Vagina (tissue), 2 donors: ENCODE measurements at regions of chr5 and their contacts with region 1.

Region 1: GRCh38 chr5:111703662-111704061 is 53.3 kb downstream of the NREP start:
- DNase-seq: no peak
- H3K4me3 ChIP-seq: no peak overlapping the region
- H3K27ac ChIP-seq: no peak overlapping the region
- H3K4me1 ChIP-seq: no peaks in the 10 kb centered on the region
- H3K27me3 ChIP-seq: no peaks in the 10 kb centered on the region
- CTCF ChIP-seq: no peak
- POLR2A ChIP-seq: no peak

Region 2: DNA sequence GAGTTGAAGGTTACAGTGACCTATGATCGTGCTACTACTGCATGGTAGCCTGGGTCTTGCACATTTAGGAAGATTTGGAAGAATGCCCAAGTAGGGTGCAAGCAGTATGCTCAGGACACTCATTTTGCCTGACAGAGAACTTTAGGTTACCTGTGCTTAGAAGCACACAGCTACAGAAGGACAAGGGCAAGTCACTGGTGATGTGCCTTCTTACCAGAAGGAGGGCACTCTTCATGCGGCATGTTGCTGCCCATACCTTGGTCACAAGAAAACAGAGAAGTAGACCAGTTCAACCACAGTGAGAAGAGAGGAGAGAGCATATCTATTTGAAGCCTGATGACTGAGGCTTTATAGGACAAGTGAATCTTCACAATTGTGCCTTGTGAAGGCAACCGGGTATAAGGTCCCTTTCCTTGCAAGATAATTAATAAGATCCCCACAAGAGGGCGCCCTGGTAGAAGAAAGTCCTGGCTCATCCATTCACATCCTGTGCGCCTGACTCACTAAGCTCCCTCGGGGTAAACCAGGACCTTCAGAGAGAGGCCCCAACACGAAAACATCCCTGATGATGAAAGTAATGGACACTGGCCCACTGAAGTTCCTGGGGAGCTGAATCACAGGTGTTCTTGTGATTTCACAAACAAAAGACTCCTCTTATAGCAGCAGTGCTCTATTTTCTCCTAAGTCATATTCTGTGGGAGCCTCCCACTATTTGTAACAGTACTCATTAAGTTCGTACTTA is 153.2 kb before region 1 on chr5:
- intact Hi-C with region 1: no loop called
- DNase-seq: peak in 1 of 2 donors; percentile 96
- H3K4me3 ChIP-seq: no peak overlapping the region
- H3K27ac ChIP-seq: peak overlapping the region; percentile 51
- H3K4me1 ChIP-seq: no peaks in the 10 kb centered on the region
- H3K27me3 ChIP-seq: no peaks in the 10 kb centered on the region
- CTCF ChIP-seq: peak; percentile 33 to 74 (median 67)
- POLR2A ChIP-seq: no peak

Region 3: DNA sequence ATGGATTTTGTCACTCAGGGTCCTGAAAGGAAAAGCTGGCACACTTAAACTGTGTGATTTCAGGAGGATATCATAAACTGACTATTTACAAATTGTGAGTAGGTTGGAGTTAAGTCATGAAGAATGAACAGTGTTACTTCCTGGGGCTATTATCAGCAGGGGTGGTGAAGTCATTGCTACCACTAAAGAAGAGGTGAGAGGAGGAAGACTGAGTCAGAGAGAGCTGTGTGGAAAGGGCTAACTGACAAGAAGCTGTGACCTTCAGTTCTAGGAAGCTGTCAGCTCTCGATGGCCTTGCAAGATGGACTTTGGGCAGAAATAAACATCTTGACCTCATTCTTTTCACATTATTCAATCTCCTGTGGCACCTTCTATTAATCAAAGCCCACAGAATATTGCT is 119.0 kb before region 1 on chr5:
- intact Hi-C with region 1: no loop called
- DNase-seq: no peak
- H3K4me3 ChIP-seq: no peak overlapping the region
- H3K27ac ChIP-seq: no peak overlapping the region
- H3K4me1 ChIP-seq: peaks cover 7% of the 10 kb centered on the region
- H3K27me3 ChIP-seq: no peaks in the 10 kb centered on the region
- CTCF ChIP-seq: no peak
- POLR2A ChIP-seq: no peak

Region 4: DNA sequence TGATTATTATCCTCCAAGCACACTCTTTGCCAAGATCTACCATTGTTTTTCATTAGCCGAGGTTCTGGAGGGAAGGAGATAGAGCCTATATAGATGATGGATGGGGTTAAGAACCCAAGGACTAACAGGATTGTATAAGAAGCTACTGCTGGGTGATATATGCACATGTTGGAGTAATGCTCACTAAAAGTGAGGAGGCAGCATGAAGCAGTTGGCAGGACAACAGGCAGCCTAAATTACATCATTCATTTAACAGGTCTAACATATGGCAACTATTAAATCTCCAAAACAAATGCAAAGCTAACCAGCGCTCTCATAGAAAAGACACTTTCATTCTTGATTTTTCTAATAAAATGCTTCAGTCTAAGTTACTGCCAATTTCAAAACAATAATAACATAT is 422.2 kb after region 1 on chr5:
- intact Hi-C with region 1: loop called (anchors 2 kb)
- DNase-seq: no peak
- H3K4me3 ChIP-seq: no peak overlapping the region
- H3K27ac ChIP-seq: no peak overlapping the region
- H3K4me1 ChIP-seq: no peaks in the 10 kb centered on the region
- H3K27me3 ChIP-seq: no peaks in the 10 kb centered on the region
- CTCF ChIP-seq: no peak
- POLR2A ChIP-seq: no peak